BJ (cell line): ENCODE measurements at regions of chr17 and their contacts with region 1.

Region 1: GRCh38 chr17:41665566-41666236 is 23.0 kb upstream of the EIF1 start:
- DNase-seq: no peak
- H3K4me3 ChIP-seq: peak overlapping the region; percentile 38
- H3K27me3 ChIP-seq: no peaks in the 10 kb centered on the region
- CTCF ChIP-seq: peak; percentile 80

Region 2: GRCh38 chr17:40803617-40804082 is 862.1 kb before region 1 on chr17:
- CTCF ChIA-PET with region 1: interaction called, 103 read pairs
- POLR2A ChIA-PET with region 1: no interaction called
- DNase-seq: no peak
- H3K4me3 ChIP-seq: no peak overlapping the region
- H3K27me3 ChIP-seq: peaks cover 11% of the 10 kb centered on the region
- CTCF ChIP-seq: peak; percentile 90

Region 3: GRCh38 chr17:40854159-40854814 is 811.4 kb before region 1 on chr17:
- CTCF ChIA-PET with region 1: interaction called, 217 read pairs
- POLR2A ChIA-PET with region 1: no interaction called
- DNase-seq: peak; percentile 87
- H3K4me3 ChIP-seq: no peak overlapping the region
- H3K27me3 ChIP-seq: no peaks in the 10 kb centered on the region
- CTCF ChIP-seq: no peak

Region 4: DNA sequence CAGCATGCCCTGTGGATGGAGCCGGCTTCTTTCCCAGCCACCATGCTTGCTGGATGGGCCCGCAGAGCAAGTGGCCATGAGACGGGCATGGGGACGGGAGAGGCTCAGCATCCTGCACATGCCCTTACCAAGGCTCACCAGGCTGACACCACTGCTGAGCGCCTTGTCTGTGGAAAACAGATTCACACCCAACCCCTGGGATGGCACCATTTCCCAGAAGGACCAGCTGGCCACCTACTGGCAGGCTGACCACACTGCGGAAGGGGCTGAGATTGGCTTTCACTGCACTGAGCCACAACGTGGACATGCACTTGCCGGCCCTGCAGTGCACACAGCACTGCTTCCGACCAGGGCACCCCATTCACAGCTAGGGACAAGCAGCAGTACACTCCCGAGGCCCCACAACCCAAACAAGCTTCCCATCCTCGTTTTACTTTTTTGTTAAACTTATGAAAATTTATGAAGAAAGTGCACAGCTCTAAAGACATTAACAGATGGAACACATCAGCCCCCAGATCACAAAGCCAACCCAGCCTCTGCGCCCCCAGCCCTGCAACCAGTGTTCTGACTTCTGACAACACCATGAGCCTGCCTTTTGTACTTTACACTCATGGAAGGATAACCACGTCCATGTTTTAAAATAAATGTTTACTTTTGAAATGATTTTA is 336.3 kb before region 1 on chr17:
- CTCF ChIA-PET with region 1: interaction called, 15 read pairs
- POLR2A ChIA-PET with region 1: no interaction called
- DNase-seq: no peak
- H3K4me3 ChIP-seq: no peak overlapping the region
- H3K27me3 ChIP-seq: no peaks in the 10 kb centered on the region
- CTCF ChIP-seq: peak; percentile 92

Region 5: DNA sequence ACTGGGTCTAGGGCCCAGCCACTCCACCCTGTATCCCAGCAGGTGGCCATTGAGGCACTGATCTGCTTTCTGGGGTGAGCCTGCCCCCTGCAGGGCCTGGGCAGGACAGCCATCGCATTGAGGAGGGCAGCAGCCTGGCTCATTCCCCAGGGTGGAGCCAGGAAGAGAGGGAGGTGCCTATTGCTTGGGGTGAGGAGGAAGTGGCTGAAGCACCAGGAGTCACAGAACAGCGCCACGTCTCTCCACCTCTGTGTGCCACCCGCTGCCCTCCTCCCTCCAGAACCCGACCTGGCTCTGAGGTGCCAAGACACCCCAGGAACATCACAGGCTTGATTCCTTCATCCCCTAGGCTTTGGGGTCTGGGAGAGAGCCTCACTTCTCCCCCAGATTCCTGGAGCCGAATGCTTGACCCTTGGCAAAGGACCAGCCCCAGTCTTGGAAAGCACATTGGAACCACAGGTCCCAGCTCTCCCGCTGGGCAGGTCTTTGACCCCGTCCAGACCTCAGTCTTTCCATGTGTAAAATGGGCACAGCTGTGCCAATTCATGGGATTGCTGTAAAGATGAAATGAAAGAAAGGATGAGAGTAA is 168.8 kb before region 1 on chr17:
- CTCF ChIA-PET with region 1: interaction called, 23 read pairs
- POLR2A ChIA-PET with region 1: interaction called, 5 read pairs
- DNase-seq: peak; percentile 51
- H3K4me3 ChIP-seq: no peak overlapping the region
- H3K27me3 ChIP-seq: no peaks in the 10 kb centered on the region
- CTCF ChIP-seq: peak; percentile 91

Region 6: DNA sequence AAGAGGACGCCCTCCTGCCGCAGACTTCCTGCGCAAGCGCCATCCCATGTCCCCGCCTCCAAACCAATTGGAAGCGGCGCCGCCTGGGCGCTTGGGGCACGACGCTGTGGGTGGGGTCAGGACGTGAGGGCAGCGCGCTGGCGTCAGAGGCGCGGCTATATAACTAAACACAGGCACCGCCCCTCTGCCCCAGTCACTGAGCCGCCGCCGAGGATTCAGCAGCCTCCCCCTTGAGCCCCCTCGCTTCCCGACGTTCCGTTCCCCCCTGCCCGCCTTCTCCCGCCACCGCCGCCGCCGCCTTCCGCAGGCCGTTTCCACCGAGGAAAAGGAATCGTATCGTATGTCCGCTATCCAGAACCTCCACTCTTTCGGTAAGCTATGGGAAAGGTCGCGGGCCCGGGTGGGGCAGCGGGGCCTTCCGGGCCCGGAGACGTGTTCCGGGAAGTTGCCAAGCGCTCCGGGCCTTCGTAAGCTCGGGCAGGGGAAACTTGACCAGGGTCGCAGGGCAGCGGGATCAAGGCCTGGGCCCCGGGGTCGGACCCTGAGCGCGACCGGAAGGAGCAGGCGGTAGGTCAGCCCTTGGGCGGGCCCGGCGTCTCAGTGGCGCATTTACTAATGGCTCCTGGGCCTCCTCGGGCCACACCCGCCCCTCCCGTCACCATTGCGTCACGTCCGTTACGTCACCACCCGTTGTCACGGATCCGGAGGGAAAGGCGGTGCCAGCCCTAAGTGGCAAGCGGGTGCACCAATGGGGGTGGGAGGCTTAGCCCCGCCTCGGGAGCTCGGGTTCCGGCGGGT is 23.2 kb after region 1 on chr17 and contains the start of gene EIF1:
- CTCF ChIA-PET with region 1: interaction called, 30 read pairs
- POLR2A ChIA-PET with region 1: no interaction called
- DNase-seq: peak; percentile 97
- H3K4me3 ChIP-seq: peak within 1 kb of the TSS; percentile 96
- H3K27me3 ChIP-seq: peaks cover 2% of the 10 kb centered on the region; the same call in 1 of the 2 replicates
- CTCF ChIP-seq: no peak
- polyA plus RNA-seq, gene EIF1: 251 and 479 TPM in 2 replicates